HEK293 (cell line): ENCODE measurements at regions of chr15 and their contacts with region 1.

Region 1: GRCh38 chr15:85380217-85380811 is at the start of gene AKAP13:
- H3K4me3 ChIP-seq: peak within 1 kb of the TSS; percentile 82
- H3K27ac ChIP-seq: peak within 1 kb of the TSS; percentile 83
- H3K4me1 ChIP-seq: peaks cover 20% of the 10 kb centered on the region
- CTCF ChIP-seq: no peak

Region 2: GRCh38 chr15:85003593-85004312 is 376.6 kb before region 1 on chr15:
- CTCF ChIA-PET with region 1: no interaction called
- POLR2A ChIA-PET with region 1: no interaction called
- H3K4me3 ChIP-seq: no peak overlapping the region
- H3K27ac ChIP-seq: no peak overlapping the region
- H3K4me1 ChIP-seq: peaks cover 39% of the 10 kb centered on the region
- CTCF ChIP-seq: no peak

Region 3: GRCh38 chr15:85089929-85090597 is 290.3 kb before region 1 on chr15:
- CTCF ChIA-PET with region 1: no interaction called
- POLR2A ChIA-PET with region 1: no interaction called
- H3K4me3 ChIP-seq: no peak overlapping the region
- H3K27ac ChIP-seq: no peak overlapping the region
- H3K4me1 ChIP-seq: no peaks in the 10 kb centered on the region
- CTCF ChIP-seq: no peak

Region 4: DNA sequence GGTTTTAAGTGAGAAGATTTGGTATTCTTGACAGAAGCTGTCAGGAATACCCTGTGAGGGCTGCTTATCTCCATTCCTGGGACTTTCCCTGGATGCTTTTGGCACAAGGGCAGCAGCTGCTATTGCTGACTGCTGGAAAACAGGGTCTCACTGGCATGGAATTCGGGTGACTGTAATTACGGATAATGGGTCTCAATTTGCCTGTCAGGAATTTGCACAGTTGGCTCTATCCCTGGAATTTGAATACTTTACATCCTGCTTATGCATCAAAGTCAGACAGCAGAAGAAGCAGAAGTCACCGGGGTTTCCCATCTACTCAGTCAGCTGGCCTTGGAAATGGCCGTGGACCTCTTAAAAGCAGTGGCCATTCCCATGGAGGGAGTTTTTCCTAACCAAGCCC is 25.9 kb before region 1 on chr15:
- CTCF ChIA-PET with region 1: no interaction called
- POLR2A ChIA-PET with region 1: interaction called, 10 read pairs
- H3K4me3 ChIP-seq: no peak overlapping the region
- H3K27ac ChIP-seq: no peak overlapping the region
- H3K4me1 ChIP-seq: no peaks in the 10 kb centered on the region
- CTCF ChIP-seq: no peak

Region 5: GRCh38 chr15:85402195-85402881 is 22.0 kb after region 1 on chr15:
- CTCF ChIA-PET with region 1: interaction called, 3 read pairs
- POLR2A ChIA-PET with region 1: interaction called, 21 read pairs
- H3K4me3 ChIP-seq: no peak overlapping the region
- H3K27ac ChIP-seq: no peak overlapping the region; the same call in 1 of the 2 replicates
- H3K4me1 ChIP-seq: peaks cover 55% of the 10 kb centered on the region
- CTCF ChIP-seq: no peak

Region 6: GRCh38 chr15:85412956-85413854 is 32.9 kb after region 1 on chr15:
- CTCF ChIA-PET with region 1: interaction called, 3 read pairs
- POLR2A ChIA-PET with region 1: interaction called, 25 read pairs
- H3K4me3 ChIP-seq: no peak overlapping the region
- H3K27ac ChIP-seq: no peak overlapping the region
- H3K4me1 ChIP-seq: peaks cover 30% of the 10 kb centered on the region
- CTCF ChIP-seq: no peak; the same call in 1 of the 2 replicates